ENCODE measurements at regions of chr5 and their contacts with region 1.

Region 1: DNA sequence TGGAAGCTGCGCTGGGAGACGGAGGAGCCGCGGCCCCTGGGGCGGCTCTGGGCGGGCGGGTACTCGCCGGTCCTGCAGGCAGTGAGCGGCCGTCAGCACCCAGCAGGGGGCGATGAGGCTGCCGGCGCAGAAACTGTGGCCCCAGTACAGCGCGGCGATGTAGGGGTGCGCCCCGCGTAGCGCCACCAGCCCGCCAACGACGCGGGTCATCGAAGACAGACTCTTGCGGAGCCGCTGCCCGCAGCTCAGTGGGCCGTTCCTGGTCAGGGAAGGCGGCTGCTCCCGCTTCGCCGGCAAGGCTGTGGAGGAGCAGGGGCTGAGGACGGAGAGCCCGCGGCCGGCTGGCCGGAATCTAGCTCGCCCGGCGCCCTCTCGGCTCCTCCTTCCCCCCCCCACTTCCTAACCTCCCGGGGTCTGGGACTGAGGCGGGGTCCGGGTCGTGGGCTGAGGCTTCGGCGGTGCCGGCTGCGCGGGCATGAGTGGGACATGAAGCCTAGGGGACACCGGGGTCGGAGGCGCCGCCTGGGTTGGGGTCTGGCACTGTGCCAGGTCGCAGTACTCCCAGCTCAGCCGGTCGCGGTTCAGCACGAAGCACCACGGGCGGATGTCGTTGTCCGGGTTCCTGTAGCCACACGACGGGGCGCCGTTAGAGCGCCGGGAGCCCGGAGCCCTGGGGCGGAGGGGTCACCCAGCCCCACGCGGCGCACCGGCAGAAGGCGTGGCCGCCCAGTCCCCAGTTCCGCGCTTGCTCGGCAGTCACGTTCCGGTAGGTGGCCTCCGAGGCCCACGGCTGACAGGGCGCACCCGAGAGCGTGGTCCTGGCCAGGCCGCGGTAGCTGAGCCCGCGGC is 3.6 kb upstream of the PFN3 start:
- DNase-seq: peak; percentile 74 to 86 (median 84)
- ATAC-seq: peak; percentile 87
- H3K4me3 ChIP-seq: peak overlapping the region; percentile 61
- H3K4me3 Mint-ChIP-seq: peak overlapping the region in 9 of 10 donors; percentile 76 to 88 (median 84)
- H3K27ac ChIP-seq: peak overlapping the region; percentile 41
- H3K27ac Mint-ChIP-seq: peak overlapping the region in 1 of 9 donors; percentile 19
- H3K4me1 ChIP-seq: peaks cover 25 to 33% of the 10 kb centered on the region in 2 donors
- H3K4me1 Mint-ChIP-seq: peaks cover 7 to 35% (median 23%) of the 10 kb centered on the region in 7 donors
- H3K27me3 ChIP-seq: no peaks in the 10 kb centered on the region
- H3K27me3 Mint-ChIP-seq: peaks cover 0 to 54% (median 0%) of the 10 kb centered on the region in 5 donors

Region 2: GRCh38 chr5:177317959-177318377 is 86.0 kb before region 1 on chr5:
- CTCF ChIA-PET with region 1: interaction called, 25 read pairs
- POLR2A ChIA-PET with region 1: no interaction called
- intact Hi-C with region 1: loop called (anchors 1 to 2 kb)
- DNase-seq: peak; percentile 41 to 73 (median 69)
- ATAC-seq: peak; percentile 84
- H3K4me3 ChIP-seq: no peak overlapping the region
- H3K4me3 Mint-ChIP-seq: no peak overlapping the region
- H3K27ac ChIP-seq: no peak overlapping the region
- H3K27ac Mint-ChIP-seq: peak overlapping the region in 2 of 9 donors; percentile 32 to 37
- H3K4me1 ChIP-seq: peaks cover 1% of the 10 kb centered on the region in 2 donors
- H3K4me1 Mint-ChIP-seq: peaks cover 0 to 49% (median 20%) of the 10 kb centered on the region in 7 donors
- H3K27me3 ChIP-seq: no peaks in the 10 kb centered on the region
- H3K27me3 Mint-ChIP-seq: no peaks in the 10 kb centered on the region

Region 3: GRCh38 chr5:177370488-177371119 is 33.4 kb before region 1 on chr5:
- CTCF ChIA-PET with region 1: interaction called, 41 read pairs
- POLR2A ChIA-PET with region 1: interaction called, 11 read pairs
- intact Hi-C with region 1: loop called in 1 of 2 experiments (anchors 1 kb)
- DNase-seq: peak in 7 of 9 donors; percentile 36 to 74 (median 65)
- ATAC-seq: peak; percentile 90
- H3K4me3 ChIP-seq: no peak overlapping the region
- H3K4me3 Mint-ChIP-seq: peak overlapping the region in 7 of 10 donors; percentile 20 to 79 (median 64)
- H3K27ac ChIP-seq: peak overlapping the region; percentile 76
- H3K27ac Mint-ChIP-seq: peak overlapping the region in 7 of 9 donors; percentile 33 to 94 (median 86)
- H3K4me1 ChIP-seq: peaks cover 36 to 73% of the 10 kb centered on the region in 2 donors
- H3K4me1 Mint-ChIP-seq: peaks cover 51 to 80% (median 70%) of the 10 kb centered on the region in 7 donors
- H3K27me3 ChIP-seq: no peaks in the 10 kb centered on the region
- H3K27me3 Mint-ChIP-seq: no peaks in the 10 kb centered on the region

Region 4: GRCh38 chr5:177431317-177432142 is 27.5 kb after region 1 on chr5:
- CTCF ChIA-PET with region 1: interaction called, 116 read pairs
- POLR2A ChIA-PET with region 1: interaction called, 210 read pairs
- intact Hi-C with region 1: loop called (anchors 1 kb)
- DNase-seq: peak; percentile 46 to 77 (median 73)
- ATAC-seq: peak; percentile 36
- H3K4me3 ChIP-seq: peak overlapping the region; percentile 95
- H3K4me3 Mint-ChIP-seq: peak overlapping the region; percentile 87 to 96 (median 94)
- H3K27ac ChIP-seq: peak overlapping the region; percentile 92
- H3K27ac Mint-ChIP-seq: peak overlapping the region; percentile 91 to 97 (median 94)
- H3K4me1 ChIP-seq: peaks cover 67 to 70% of the 10 kb centered on the region in 2 donors
- H3K4me1 Mint-ChIP-seq: peaks cover 37 to 87% (median 66%) of the 10 kb centered on the region in 7 donors
- H3K27me3 ChIP-seq: no peaks in the 10 kb centered on the region
- H3K27me3 Mint-ChIP-seq: no peaks in the 10 kb centered on the region

Region 5: GRCh38 chr5:177454397-177455035 is 50.5 kb after region 1 on chr5:
- CTCF ChIA-PET with region 1: interaction called, 189 read pairs
- POLR2A ChIA-PET with region 1: interaction called, 156 read pairs
- intact Hi-C with region 1: loop called (anchors 1 kb)
- DNase-seq: peak; percentile 83 to 98 (median 88)
- ATAC-seq: peak; percentile 68
- H3K4me3 ChIP-seq: peak overlapping the region; percentile 70
- H3K4me3 Mint-ChIP-seq: peak overlapping the region; percentile 66 to 92 (median 85)
- H3K27ac ChIP-seq: peak overlapping the region; percentile 97
- H3K27ac Mint-ChIP-seq: peak overlapping the region in 7 of 9 donors; percentile 51 to 95 (median 90)
- H3K4me1 ChIP-seq: peaks cover 12% of the 10 kb centered on the region in 2 donors
- H3K4me1 Mint-ChIP-seq: peaks cover 10 to 27% (median 17%) of the 10 kb centered on the region in 7 donors
- H3K27me3 ChIP-seq: no peaks in the 10 kb centered on the region
- H3K27me3 Mint-ChIP-seq: peaks cover 0 to 22% (median 0%) of the 10 kb centered on the region in 5 donors